ENCODE measurements at regions of chr7 and their contacts with region 1.

Region 1: GRCh38 chr7:140738280-140738679 is 41.8 kb downstream of the NDUFB2 start:
- DNase-seq: no peak
- ATAC-seq: no peak
- H3K4me3 Mint-ChIP-seq: no peak overlapping the region
- H3K27ac Mint-ChIP-seq: no peak overlapping the region
- H3K4me1 Mint-ChIP-seq: no peaks in the 10 kb centered on the region
- H3K27me3 Mint-ChIP-seq: no peaks in the 10 kb centered on the region
- CTCF ChIP-seq: no peak

Region 2: GRCh38 chr7:140656548-140657515 is 81.4 kb before region 1 on chr7:
- CTCF ChIA-PET with region 1: no interaction called
- POLR2A ChIA-PET with region 1: no interaction called
- intact Hi-C with region 1: no loop called
- DNase-seq: peak; percentile 66
- ATAC-seq: peak; percentile 92
- H3K4me3 Mint-ChIP-seq: peak overlapping the region; percentile 68
- H3K27ac Mint-ChIP-seq: peak overlapping the region; percentile 73
- H3K4me1 Mint-ChIP-seq: peaks cover 17% of the 10 kb centered on the region
- H3K27me3 Mint-ChIP-seq: peaks cover 5% of the 10 kb centered on the region
- CTCF ChIP-seq: no peak

Region 3: GRCh38 chr7:140726281-140726680 is 12.0 kb before region 1 on chr7:
- CTCF ChIA-PET with region 1: interaction called, 10 read pairs
- POLR2A ChIA-PET with region 1: no interaction called
- intact Hi-C with region 1: no loop called
- DNase-seq: no peak
- ATAC-seq: no peak
- H3K4me3 Mint-ChIP-seq: no peak overlapping the region
- H3K27ac Mint-ChIP-seq: no peak overlapping the region
- H3K4me1 Mint-ChIP-seq: peaks cover 34% of the 10 kb centered on the region
- H3K27me3 Mint-ChIP-seq: no peaks in the 10 kb centered on the region
- CTCF ChIP-seq: peak; percentile 42

Region 4: DNA sequence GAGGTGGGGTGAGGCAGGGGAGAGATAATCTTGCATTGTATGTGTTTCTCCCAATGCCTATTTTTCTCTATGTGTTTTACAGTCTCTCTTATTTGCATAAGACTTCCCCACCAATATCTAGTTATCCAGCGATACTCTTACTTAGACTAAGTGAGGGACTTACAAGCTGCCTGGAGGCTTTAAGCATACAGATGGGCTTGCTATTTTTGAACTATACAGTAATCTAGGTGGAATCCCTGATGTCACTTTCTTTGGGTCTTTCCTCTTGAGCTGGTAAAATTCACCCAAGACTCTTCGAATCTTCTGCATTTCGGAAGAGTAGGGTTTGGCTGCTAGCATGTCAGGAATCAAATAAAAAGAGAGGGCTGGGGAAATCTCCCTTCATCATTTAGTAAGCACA is 34.8 kb after region 1 on chr7:
- CTCF ChIA-PET with region 1: no interaction called
- POLR2A ChIA-PET with region 1: no interaction called
- intact Hi-C with region 1: no loop called
- DNase-seq: no peak
- ATAC-seq: no peak
- H3K4me3 Mint-ChIP-seq: no peak overlapping the region
- H3K27ac Mint-ChIP-seq: no peak overlapping the region
- H3K4me1 Mint-ChIP-seq: no peaks in the 10 kb centered on the region
- H3K27me3 Mint-ChIP-seq: no peaks in the 10 kb centered on the region
- CTCF ChIP-seq: no peak

Region 5: GRCh38 chr7:141884539-141885225 is 1146.4 kb after region 1 on chr7:
- CTCF ChIA-PET with region 1: no interaction called
- POLR2A ChIA-PET with region 1: no interaction called
- intact Hi-C with region 1: no loop called
- DNase-seq: no peak
- ATAC-seq: no peak
- H3K4me3 Mint-ChIP-seq: no peak overlapping the region
- H3K27ac Mint-ChIP-seq: no peak overlapping the region
- H3K4me1 Mint-ChIP-seq: no peaks in the 10 kb centered on the region
- H3K27me3 Mint-ChIP-seq: peaks cover 7% of the 10 kb centered on the region
- CTCF ChIP-seq: no peak